PC-9 (cell line): ENCODE measurements at regions of chr4 and their contacts with region 1.

Region 1: DNA sequence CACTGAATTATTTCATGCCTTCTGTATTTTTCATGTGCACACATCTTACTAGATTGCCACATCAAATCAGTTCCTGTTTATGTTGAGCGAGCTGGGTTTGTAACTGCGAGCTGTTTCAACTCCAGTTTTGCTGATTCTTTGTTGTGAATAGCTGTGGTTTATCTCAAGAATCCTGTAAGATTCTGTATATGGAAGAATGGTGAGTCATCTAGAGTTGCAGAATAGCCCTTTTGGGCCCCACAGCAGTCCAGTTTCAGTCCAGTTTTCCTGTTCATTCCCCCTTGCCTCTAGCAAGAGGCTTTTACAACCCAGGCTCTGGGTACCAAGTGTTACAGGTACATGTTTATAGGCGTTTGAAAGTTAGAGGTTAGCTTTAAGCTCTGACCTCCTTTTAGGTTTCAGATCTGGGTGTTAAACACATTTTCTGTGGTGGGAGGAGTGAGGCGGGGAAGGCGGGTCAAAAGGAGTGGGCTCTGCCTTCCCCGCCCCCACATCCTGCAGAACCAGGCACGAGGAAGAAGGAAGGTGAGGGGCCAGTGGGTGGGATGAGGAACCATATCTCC is 32.7 kb downstream of the TBC1D14 start:
- DNase-seq: peak; percentile 53 to 92
- H3K4me3 ChIP-seq: peak overlapping the region; percentile 36; the same call in 1 of the 2 replicates
- H3K27ac ChIP-seq: peak overlapping the region; percentile 94
- H3K4me1 ChIP-seq: peaks cover 39% of the 10 kb centered on the region
- H3K27me3 ChIP-seq: no peaks in the 10 kb centered on the region
- CTCF ChIP-seq: no peak

Region 2: DNA sequence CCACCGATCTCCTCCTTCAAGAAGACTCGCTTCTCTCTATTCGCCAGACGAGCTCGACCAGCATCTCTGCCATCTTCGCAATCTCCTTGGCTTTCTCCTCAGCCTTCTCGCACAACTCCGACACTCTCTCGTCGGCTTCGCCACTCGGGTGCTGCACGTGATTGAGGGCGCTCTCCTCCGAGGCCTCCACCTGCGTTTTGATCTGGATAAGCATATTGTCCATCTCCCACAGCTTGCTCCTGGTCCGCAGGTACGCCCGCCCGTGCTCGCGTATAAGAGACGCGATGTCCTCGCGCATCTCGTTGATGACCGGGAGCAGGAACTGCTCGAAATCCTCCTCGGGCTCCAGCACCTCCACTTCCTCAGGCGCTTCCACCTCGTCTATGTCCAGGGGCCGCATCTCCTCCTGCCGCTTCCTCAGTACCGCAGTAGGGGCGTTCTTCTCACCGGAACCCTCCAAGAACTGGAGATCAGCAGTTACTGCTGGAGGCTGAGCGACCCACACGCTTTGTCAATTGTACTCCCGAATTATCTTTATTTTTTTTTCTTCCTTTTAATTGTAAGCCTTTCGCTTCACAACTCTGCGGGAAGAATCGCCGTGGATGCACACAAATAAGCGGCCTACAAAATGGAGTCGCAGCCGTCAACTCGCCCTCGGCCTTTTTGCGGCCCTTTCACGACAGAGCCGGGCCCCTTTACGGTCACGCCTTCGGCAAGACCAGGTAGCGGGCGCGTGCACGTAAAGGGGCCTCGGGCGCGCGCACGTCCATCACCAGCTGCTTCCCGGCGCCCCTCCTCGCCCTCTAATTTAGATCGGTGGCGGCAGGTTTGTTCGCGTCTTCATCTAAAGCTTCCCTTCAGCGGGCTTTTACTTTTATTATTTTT is 232.8 kb before region 1 on chr4 and contains the start of gene MRFAP1L1:
- CTCF ChIA-PET with region 1: no interaction called
- POLR2A ChIA-PET with region 1: no interaction called
- intact Hi-C with region 1: no loop called
- DNase-seq: peak; percentile 87 to 95
- H3K4me3 ChIP-seq: peak within 1 kb of the TSS; percentile 96
- H3K27ac ChIP-seq: peak within 1 kb of the TSS; percentile 50
- H3K4me1 ChIP-seq: peaks cover 18% of the 10 kb centered on the region
- H3K27me3 ChIP-seq: no peaks in the 10 kb centered on the region
- CTCF ChIP-seq: no peak
- total RNA-seq, gene MRFAP1L1: 51.4 and 52.1 TPM in 2 replicates

Region 3: DNA sequence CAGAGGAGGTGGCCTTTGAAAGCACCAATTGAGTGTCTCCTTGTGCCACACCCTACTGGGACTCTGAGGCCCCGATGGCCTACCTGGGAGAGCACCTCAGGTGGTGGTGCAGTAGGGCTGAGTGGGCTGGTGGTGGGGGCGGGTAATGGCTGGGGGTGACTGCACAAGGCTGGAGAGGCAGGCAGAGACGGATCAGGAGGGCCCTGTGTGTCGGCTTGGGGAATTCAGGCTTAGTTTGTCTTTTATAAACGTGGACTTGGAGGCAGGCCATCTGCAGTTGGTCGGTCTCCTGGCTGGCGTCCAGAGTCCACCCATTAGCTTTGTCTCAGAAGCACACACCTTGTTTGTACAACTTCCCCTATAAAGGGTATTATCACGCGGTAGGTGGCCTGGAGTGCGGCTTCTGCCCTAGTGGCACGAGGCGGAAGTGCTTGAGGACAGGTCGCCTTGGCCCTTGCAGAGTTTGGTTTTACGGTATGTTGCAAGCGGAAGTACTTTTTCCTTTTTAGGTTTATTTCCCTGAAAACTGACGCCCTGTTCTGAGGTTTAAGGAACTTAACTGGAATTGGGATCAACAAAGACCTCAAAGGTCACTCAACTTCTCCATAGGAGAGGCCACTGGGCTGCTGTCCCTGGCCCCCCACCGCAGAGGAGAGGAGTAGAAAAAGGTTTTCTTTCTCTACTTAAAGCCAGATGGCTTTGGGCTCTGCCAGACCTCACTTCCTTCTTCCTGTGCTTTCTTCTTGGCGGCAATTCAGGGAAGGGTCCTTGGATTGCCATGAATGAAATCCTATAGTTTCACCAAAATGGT is 24.7 kb before region 1 on chr4:
- CTCF ChIA-PET with region 1: no interaction called
- POLR2A ChIA-PET with region 1: no interaction called
- intact Hi-C with region 1: loop called (anchors 1 kb)
- DNase-seq: peak; percentile 85 to 92
- H3K4me3 ChIP-seq: peak overlapping the region; percentile 11; the same call in 1 of the 2 replicates
- H3K27ac ChIP-seq: peak overlapping the region; percentile 86
- H3K4me1 ChIP-seq: peaks cover 39% of the 10 kb centered on the region
- H3K27me3 ChIP-seq: no peaks in the 10 kb centered on the region
- CTCF ChIP-seq: peak; percentile 63

Region 4: GRCh38 chr4:6953751-6954380 is 11.5 kb after region 1 on chr4:
- CTCF ChIA-PET with region 1: interaction called, 3 read pairs
- POLR2A ChIA-PET with region 1: interaction called, 3 read pairs
- intact Hi-C with region 1: loop called (anchors 1 kb)
- DNase-seq: peak in 1 of 2 experiments; percentile 77
- H3K4me3 ChIP-seq: no peak overlapping the region
- H3K27ac ChIP-seq: peak overlapping the region; percentile 95
- H3K4me1 ChIP-seq: peaks cover 28% of the 10 kb centered on the region
- H3K27me3 ChIP-seq: no peaks in the 10 kb centered on the region
- CTCF ChIP-seq: no peak

Region 5: GRCh38 chr4:6986781-6987587 is 44.7 kb after region 1 on chr4:
- CTCF ChIA-PET with region 1: no interaction called
- POLR2A ChIA-PET with region 1: interaction called, 4 read pairs
- intact Hi-C with region 1: loop called (anchors 5 kb)
- DNase-seq: peak; percentile 79 to 96
- H3K4me3 ChIP-seq: peak overlapping the region; percentile 92
- H3K27ac ChIP-seq: peak overlapping the region; percentile 86
- H3K4me1 ChIP-seq: peaks cover 24% of the 10 kb centered on the region
- H3K27me3 ChIP-seq: no peaks in the 10 kb centered on the region
- CTCF ChIP-seq: no peak